HepG2 (cell line): ENCODE measurements at regions of chr2 and their contacts with region 1.

Region 1: DNA sequence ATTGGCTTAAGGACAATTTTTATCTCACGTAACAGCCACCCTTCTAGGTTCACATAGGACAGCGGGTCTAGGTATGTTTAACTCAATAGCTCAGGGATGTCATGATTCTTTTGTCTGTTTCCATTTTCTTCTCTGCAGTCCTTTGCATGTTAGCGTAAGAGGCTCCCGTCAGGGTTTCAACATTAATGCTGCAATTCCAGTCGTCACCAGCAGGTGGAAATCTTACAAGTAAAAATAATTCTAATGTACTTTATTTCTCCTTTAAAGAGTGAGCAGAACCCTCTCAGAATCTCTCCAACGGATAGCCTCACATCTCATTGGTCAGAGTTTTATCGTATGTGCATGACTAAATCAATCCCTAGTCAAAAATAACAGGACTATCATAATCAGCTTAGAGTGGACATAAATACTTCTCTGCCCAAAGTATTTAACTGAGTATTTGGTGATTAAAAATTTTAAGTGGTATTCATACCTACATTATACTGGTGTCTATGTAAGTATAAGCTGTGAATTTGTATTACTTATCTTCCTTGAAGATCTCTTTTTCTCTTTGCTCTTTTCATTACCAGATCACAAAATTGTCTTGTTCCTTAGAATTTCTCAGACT is 487.2 kb upstream of the GCFC2 start:
- DNase-seq: peak; percentile 72
- ATAC-seq: peak; percentile 62
- H3K4me3 ChIP-seq: no peak overlapping the region
- H3K27ac ChIP-seq: no peak overlapping the region
- H3K4me1 ChIP-seq: peaks cover 28% of the 10 kb centered on the region
- H3K27me3 ChIP-seq: no peaks in the 10 kb centered on the region
- CTCF ChIP-seq: peak; percentile 67
- EP300 ChIP-seq: no peak
- POLR2A ChIP-seq: no peak
- RAD21 ChIP-seq: peak; percentile 63

Region 2: DNA sequence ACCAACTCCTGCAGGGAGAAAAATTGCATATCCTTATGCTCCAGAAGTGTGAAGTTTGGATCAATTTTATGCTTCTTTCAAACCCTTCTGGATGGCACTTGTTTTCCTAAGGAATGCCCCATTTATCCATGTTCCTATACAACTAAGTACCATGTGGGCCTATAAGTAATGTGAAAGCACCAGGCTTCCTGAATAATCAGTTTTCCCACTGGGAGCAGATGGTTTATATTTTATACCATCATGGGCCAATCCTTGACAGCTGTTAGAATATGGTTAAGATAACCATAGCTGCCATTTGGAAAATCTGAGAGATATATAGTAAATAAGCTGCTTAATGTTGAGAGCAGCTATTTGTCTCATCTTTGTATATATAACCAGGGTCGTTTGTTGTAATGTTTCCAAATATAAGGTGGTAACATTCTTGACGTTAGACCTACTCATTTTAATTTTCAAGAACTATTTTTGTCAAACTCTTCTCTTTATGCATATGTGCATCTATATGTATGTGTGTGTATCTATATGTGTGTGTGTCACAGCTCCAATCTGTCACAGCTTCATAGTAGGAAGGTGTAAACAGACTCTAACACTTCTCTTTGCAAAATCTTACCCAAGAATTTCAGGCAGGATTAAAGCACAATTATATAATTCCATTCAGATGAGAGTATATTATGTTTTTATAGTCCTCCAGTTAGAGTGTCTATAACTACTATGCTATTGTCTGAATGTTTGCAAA is 28.5 kb before region 1 on chr2:
- CTCF ChIA-PET with region 1: no interaction called
- POLR2A ChIA-PET with region 1: interaction called, 3 read pairs
- in situ Hi-C with region 1: no loop called
- intact Hi-C with region 1: loop called (anchors 1 kb)
- DNase-seq: no peak
- ATAC-seq: no peak
- H3K4me3 ChIP-seq: no peak overlapping the region
- H3K27ac ChIP-seq: no peak overlapping the region
- H3K4me1 ChIP-seq: peaks cover 50% of the 10 kb centered on the region
- H3K27me3 ChIP-seq: no peaks in the 10 kb centered on the region
- CTCF ChIP-seq: no peak
- EP300 ChIP-seq: no peak
- POLR2A ChIP-seq: no peak
- RAD21 ChIP-seq: no peak

Region 3: DNA sequence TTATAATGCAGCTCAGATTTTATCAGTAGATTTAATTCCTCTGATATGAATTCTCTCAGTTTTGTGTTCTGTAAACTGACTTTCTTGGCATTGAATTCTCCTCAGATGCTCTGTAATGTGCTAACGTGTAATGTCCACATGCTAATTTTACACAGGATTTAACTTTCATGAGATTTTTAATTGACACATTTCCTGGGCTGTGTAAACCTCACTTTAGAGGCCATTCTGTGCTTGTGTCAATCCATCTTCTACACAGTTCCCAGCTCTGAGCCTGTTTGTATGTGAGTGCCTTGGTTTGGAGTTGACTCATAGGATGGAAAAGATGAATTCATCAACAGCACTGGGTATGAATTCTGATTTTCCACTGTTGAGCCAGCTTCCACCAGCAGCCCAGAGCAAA is 10.5 kb before region 1 on chr2:
- CTCF ChIA-PET with region 1: no interaction called
- POLR2A ChIA-PET with region 1: no interaction called
- in situ Hi-C with region 1: no loop called
- intact Hi-C with region 1: no loop called
- DNase-seq: no peak
- ATAC-seq: no peak
- H3K4me3 ChIP-seq: no peak overlapping the region
- H3K27ac ChIP-seq: no peak overlapping the region
- H3K4me1 ChIP-seq: peaks cover 16% of the 10 kb centered on the region
- H3K27me3 ChIP-seq: no peaks in the 10 kb centered on the region
- CTCF ChIP-seq: no peak
- EP300 ChIP-seq: no peak
- POLR2A ChIP-seq: no peak
- RAD21 ChIP-seq: no peak

Region 4: DNA sequence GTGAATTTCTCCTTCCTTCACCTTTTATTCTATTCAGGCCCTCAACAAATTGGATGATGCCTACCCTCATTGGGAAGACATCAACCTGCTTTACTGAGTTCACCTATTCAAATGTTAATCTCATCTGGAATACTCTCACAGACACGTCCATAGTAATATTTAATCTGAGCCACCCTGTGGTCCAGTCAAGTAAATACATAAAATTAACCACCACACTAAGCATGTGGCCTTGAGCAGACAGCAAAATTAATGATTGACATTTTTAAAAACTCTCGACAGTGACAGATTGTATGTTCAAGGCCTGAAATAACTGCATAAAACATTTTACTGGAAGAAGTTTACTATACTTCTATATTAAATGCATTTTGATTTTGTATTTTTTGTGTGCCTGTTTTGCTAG is 53.4 kb after region 1 on chr2:
- CTCF ChIA-PET with region 1: no interaction called
- POLR2A ChIA-PET with region 1: no interaction called
- in situ Hi-C with region 1: no loop called
- intact Hi-C with region 1: loop called (anchors 1 kb)
- DNase-seq: peak; percentile 10
- ATAC-seq: peak; percentile 77
- H3K4me3 ChIP-seq: no peak overlapping the region
- H3K27ac ChIP-seq: no peak overlapping the region
- H3K4me1 ChIP-seq: 0 out of 2 replicates have a peak, but pooled peaks cover 5% of the 10 kb centered on the region
- H3K27me3 ChIP-seq: no peaks in the 10 kb centered on the region
- CTCF ChIP-seq: no peak
- EP300 ChIP-seq: no peak
- POLR2A ChIP-seq: no peak
- RAD21 ChIP-seq: no peak